ENCODE measurements at regions of chr10 and their contacts with region 1.

Region 1: GRCh38 chr10:49552249-49552672 is 13.3 kb upstream of the ERCC6 start:
- DNase-seq: peak; percentile 90
- H3K4me3 ChIP-seq: no peak overlapping the region
- H3K27ac ChIP-seq: peak overlapping the region; percentile 99
- H3K4me1 ChIP-seq: peaks cover 51% of the 10 kb centered on the region
- H3K27me3 ChIP-seq: no peaks in the 10 kb centered on the region
- CTCF ChIP-seq: no peak

Region 2: GRCh38 chr10:49474901-49475300 is 77.4 kb before region 1 on chr10:
- CTCF ChIA-PET with region 1: no interaction called
- dilution Hi-C with region 1: no loop called
- in situ Hi-C with region 1: no loop called
- intact Hi-C with region 1: no loop called
- DNase-seq: peak; percentile 23
- H3K4me3 ChIP-seq: no peak overlapping the region
- H3K27ac ChIP-seq: no peak overlapping the region
- H3K4me1 ChIP-seq: no peaks in the 10 kb centered on the region
- H3K27me3 ChIP-seq: no peaks in the 10 kb centered on the region
- CTCF ChIP-seq: no peak

Region 3: GRCh38 chr10:49568235-49568634 is 16.0 kb after region 1 on chr10:
- CTCF ChIA-PET with region 1: no interaction called
- dilution Hi-C with region 1: no loop called
- in situ Hi-C with region 1: no loop called
- intact Hi-C with region 1: loop called (anchors 1 kb)
- DNase-seq: peak; percentile 86
- H3K4me3 ChIP-seq: peak overlapping the region in 1 of 3 experiments; percentile 29
- H3K27ac ChIP-seq: peak overlapping the region; percentile 96
- H3K4me1 ChIP-seq: peaks cover 44% of the 10 kb centered on the region
- H3K27me3 ChIP-seq: no peaks in the 10 kb centered on the region
- CTCF ChIP-seq: no peak

Region 4: DNA sequence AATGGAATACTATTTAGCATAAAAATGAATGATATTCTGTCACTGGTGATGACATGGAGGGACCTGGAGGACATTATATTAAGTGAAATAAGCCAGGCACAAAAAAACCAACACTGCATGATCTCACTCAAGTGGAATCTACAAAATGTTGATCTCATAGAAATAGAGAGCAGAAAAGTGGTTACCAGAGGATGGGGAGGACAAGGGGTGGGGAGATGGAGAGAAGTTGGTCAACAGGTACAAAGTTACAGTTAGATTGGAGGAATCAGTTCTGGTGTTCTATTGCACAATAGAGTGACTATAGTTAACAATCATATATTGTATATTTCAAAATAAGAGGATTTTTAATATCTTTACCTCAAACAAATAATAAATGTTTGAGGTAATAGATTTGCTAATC is 33.1 kb after region 1 on chr10:
- CTCF ChIA-PET with region 1: no interaction called
- dilution Hi-C with region 1: no loop called
- in situ Hi-C with region 1: no loop called
- intact Hi-C with region 1: loop called (anchors 2 kb)
- DNase-seq: peak; percentile 51
- H3K4me3 ChIP-seq: no peak overlapping the region
- H3K27ac ChIP-seq: no peak overlapping the region
- H3K4me1 ChIP-seq: peaks cover 9% of the 10 kb centered on the region
- H3K27me3 ChIP-seq: no peaks in the 10 kb centered on the region
- CTCF ChIP-seq: no peak

Region 5: DNA sequence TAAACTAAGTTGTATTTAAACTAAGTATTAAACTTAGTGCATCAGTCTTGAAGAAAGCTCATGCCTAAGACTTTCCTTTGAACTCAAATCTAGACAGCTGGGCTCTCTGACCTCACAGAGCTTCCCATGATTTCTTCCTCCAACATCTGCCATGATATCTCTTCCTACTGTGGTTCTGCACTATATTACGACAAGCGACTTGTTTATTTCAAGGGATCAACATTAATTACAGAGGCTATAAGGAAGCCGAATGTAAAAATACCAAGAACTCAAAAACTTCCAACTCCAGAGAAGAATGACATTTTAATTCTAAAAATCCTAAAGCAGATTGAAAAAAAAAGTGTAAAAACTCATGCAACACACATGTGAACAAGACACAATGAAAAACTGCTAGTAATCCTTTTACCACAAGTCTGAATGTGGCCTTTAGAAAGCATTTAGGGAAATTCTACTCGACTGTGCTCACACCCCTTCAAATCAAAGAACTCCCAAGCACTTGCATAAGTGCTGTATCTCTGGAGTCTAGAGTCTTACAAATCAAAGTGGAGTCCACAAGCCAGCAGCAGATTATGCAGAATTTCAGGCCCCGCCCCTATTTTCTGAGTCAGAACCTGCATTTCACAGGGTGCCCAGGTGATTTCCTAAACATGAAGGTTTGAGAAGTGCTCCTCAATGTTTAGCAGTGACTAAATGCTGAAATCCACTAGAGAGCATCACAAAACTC is 492.8 kb after region 1 on chr10:
- CTCF ChIA-PET with region 1: no interaction called
- dilution Hi-C with region 1: no loop called
- in situ Hi-C with region 1: no loop called
- intact Hi-C with region 1: no loop called
- DNase-seq: peak; percentile 84
- H3K4me3 ChIP-seq: no peak overlapping the region
- H3K27ac ChIP-seq: no peak overlapping the region
- H3K4me1 ChIP-seq: no peaks in the 10 kb centered on the region
- H3K27me3 ChIP-seq: no peaks in the 10 kb centered on the region
- CTCF ChIP-seq: no peak

Measured in mammary epithelial cell (primary cell).